IMR-90 (cell line): ENCODE measurements at regions of chr10 and their contacts with region 1.

Region 1: GRCh38 chr10:70169649-70170364 is 507 bp downstream of the SAR1A start:
- DNase-seq: no peak
- ATAC-seq: peak; percentile 35
- H3K4me3 ChIP-seq: peak overlapping the region; percentile 99
- H3K27ac ChIP-seq: peak overlapping the region; percentile 94
- H3K4me1 ChIP-seq: peaks cover 12% of the 10 kb centered on the region
- H3K27me3 ChIP-seq: no peaks in the 10 kb centered on the region
- CTCF ChIP-seq: no peak
- POLR2A ChIP-seq: no peak
- RAD21 ChIP-seq: no peak

Region 2: DNA sequence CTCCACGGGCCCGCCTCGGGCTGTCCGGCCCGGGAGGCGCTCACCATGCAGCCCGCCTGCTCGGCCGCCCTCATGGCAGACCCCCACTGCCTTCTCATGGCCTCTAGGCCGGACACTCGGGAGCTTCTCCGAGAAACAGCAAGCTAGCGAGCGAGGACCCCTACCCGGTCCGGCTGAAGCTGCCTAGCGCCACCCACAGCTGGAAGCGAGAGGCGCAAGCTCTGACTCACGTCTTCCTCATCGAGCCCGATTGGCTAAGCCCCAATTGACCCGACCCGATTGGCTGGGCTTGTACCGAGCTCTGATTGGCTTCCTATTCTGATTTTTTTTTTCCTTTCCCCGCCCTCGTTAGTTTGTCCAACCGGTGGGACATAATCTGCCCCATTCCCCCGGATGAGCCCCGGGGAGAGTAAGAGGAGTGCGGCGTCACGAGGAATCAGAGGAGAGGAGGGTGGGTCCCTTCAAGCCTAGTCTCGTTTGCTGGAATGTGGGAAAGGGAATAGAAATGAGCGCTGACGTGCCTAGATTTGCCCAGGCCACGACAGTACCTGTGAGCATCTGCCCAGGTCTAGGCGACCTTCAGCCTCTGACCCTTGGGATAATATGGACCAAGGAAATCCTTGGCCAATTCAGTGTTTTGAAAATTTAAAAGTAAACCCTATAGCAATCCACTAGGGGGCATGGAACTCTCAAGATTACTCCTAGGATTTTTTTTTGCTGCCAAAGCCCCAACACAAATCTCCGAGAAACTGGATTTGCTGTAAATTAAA is 23.1 kb before region 1 on chr10 and contains the start of gene TYSND1:
- CTCF ChIA-PET with region 1: interaction called, 6 read pairs
- POLR2A ChIA-PET with region 1: interaction called, 13 read pairs
- dilution Hi-C with region 1: no loop called
- in situ Hi-C with region 1: no loop called
- intact Hi-C with region 1: no loop called
- DNase-seq: peak; percentile 98
- ATAC-seq: peak; percentile 92
- H3K4me3 ChIP-seq: peak within 1 kb of the TSS; percentile 49
- H3K27ac ChIP-seq: peak within 1 kb of the TSS; percentile 76
- H3K4me1 ChIP-seq: peaks cover 11% of the 10 kb centered on the region
- H3K27me3 ChIP-seq: no peaks in the 10 kb centered on the region
- CTCF ChIP-seq: peak; percentile 85
- POLR2A ChIP-seq: peak; percentile 94
- RAD21 ChIP-seq: peak; percentile 63
- total RNA-seq, gene TYSND1: 2.8 and 2.9 TPM in 2 replicates

Region 3: GRCh38 chr10:70191972-70192305 is 22.1 kb after region 1 on chr10:
- CTCF ChIA-PET with region 1: interaction called, 4 read pairs
- POLR2A ChIA-PET with region 1: interaction called, 9 read pairs
- dilution Hi-C with region 1: no loop called
- in situ Hi-C with region 1: no loop called
- intact Hi-C with region 1: loop called (anchors 2 kb)
- DNase-seq: peak; percentile 95
- ATAC-seq: peak; percentile 86
- H3K4me3 ChIP-seq: no peak overlapping the region
- H3K27ac ChIP-seq: no peak overlapping the region; the same call in 1 of the 2 replicates
- H3K4me1 ChIP-seq: peaks cover 33% of the 10 kb centered on the region
- H3K27me3 ChIP-seq: no peaks in the 10 kb centered on the region
- CTCF ChIP-seq: no peak
- POLR2A ChIP-seq: no peak
- RAD21 ChIP-seq: no peak

Region 4: GRCh38 chr10:70227548-70228320 is 57.9 kb after region 1 on chr10:
- CTCF ChIA-PET with region 1: no interaction called
- POLR2A ChIA-PET with region 1: interaction called, 11 read pairs
- dilution Hi-C with region 1: no loop called
- in situ Hi-C with region 1: no loop called
- intact Hi-C with region 1: no loop called
- DNase-seq: no peak
- ATAC-seq: no peak
- H3K4me3 ChIP-seq: no peak overlapping the region
- H3K27ac ChIP-seq: no peak overlapping the region
- H3K4me1 ChIP-seq: peaks cover 1% of the 10 kb centered on the region; the same call in 1 of the 2 replicates
- H3K27me3 ChIP-seq: no peaks in the 10 kb centered on the region
- CTCF ChIP-seq: no peak
- POLR2A ChIP-seq: no peak
- RAD21 ChIP-seq: no peak